H1 (cell line): ENCODE measurements at regions of chr3 and their contacts with region 1.

Region 1: DNA sequence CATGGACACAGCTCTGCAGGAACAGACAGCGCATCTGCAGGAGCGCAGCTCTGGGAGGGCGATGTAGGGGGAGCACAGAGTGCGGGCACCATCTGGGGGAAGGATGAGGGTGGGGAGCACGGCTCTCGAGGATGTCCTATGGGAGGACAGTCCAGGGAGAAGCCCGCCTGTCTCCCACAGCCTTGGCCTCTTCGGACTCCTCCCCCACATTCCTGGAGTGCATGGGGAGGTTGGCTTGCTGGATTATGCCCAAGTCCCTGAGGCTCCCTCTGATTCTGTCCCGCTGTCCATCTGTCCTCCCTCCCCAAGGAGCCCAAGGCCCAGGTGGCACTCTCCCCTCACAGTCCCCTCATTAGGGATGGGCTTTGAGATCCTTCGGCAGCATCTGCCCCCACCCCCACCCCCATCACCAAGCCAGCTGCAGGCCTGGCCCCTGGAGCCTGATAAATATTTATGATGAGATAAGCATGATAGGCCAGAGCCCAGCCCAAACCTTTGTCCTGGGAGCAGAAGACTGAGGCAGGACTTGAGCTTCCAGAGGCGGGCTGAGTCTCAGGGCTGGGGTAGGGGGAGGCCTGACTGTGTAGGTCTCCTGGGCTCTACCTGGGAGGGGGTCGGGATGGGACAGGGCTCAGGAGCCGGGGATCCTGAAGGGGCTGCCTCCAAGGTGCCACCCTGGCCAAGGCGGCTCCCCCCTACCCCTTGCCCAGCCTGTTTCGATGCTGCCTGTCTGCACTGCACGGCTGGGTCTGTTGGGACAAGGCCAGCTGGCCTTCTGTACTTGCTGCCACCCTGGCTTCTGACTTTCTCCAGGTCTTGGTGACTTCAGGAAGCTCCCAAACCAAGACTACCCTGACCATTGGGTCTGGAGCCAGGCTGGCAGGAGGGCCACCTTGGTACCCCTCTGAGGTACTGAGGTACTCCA is 28.6 kb upstream of the SEMA3F start:
- DNase-seq: peak in 1 of 2 experiments; percentile 58
- H3K4me3 ChIP-seq: no peak overlapping the region
- H3K27ac ChIP-seq: no peak overlapping the region; the same call in none of the 2 replicates
- H3K4me1 ChIP-seq: peaks cover 4 to 32% (median 23%) of the 10 kb centered on the region in 4 experiments
- H3K27me3 ChIP-seq: no peaks in the 10 kb centered on the region
- CTCF ChIP-seq: no peak
- EP300 ChIP-seq: no peak
- POLR2A ChIP-seq: no peak
- RAD21 ChIP-seq: no peak

Region 2: GRCh38 chr3:50138266-50139200 is 12.0 kb after region 1 on chr3:
- CTCF ChIA-PET with region 1: interaction called, 63 read pairs
- POLR2A ChIA-PET with region 1: interaction called, 133 read pairs
- DNase-seq: peak in 1 of 2 experiments; percentile 71
- H3K4me3 ChIP-seq: peak overlapping the region in 3 of 4 experiments; percentile 17 to 45 (median 36); a peak in 3 of 8 replicates
- H3K27ac ChIP-seq: peak overlapping the region; percentile 41; the same call in 1 of the 2 replicates
- H3K4me1 ChIP-seq: peaks cover 4 to 32% (median 28%) of the 10 kb centered on the region in 4 experiments
- H3K27me3 ChIP-seq: no peaks in the 10 kb centered on the region; a peak in 1 of 7 replicates
- CTCF ChIP-seq: no peak
- EP300 ChIP-seq: no peak
- POLR2A ChIP-seq: no peak; a peak in 1 of 3 replicates
- RAD21 ChIP-seq: no peak